ENCODE measurements at regions of chr3 and their contacts with region 1.

Region 1: DNA sequence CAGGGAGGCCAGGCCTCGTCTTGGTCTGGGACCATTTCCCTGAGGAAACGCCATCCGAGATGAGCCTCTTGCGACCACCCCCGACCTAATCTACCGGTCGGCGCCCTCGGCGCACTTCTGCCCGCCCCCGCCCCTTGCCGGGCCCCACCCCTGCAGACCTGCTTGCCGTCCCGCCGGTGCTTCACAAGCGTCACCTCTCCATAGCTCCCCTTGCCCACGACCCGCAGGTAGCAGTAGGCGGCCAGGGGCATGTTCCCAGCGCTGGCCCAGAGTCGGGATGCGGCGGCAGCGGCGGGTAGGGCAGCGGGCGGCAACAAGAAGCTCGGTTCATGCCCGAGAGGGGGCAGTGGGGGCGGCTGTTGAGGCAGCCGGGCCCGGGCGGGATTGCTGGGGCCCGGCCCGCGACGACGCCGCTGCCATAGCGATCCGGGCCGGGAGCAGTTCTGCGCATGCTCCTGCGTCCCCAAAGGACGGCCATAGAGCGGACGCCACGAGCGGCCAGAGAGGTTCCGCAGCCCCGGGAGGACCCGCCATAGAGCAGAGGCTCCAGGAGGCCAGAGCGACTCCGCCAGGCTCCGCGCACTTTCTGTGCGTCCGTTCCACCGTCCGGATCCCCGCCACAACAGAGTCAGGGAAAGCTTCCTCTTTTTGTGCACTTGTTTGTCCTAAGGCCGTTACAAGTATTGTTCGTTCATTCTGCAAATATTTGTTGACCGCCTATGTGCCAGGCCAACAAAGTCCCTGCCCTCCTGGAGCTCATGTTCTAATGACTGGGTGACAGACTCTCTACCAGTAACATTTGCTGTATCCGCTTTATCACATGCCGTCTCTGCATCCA is at the start of gene NEK4:
- DNase-seq: peak; percentile 84 to 90
- ATAC-seq: peak; percentile 96 to 97
- H3K4me3 ChIP-seq: peak within 1 kb of the TSS; percentile 83 to 97 (median 96)
- H3K27ac ChIP-seq: peak within 1 kb of the TSS; percentile 80 to 89 (median 84)
- H3K4me1 ChIP-seq: peaks cover 12 to 16% of the 10 kb centered on the region in 2 donors
- H3K27me3 ChIP-seq: no peaks in the 10 kb centered on the region
- CTCF ChIP-seq: no peak
- POLR2A ChIP-seq: peak; percentile 52 to 75
- total RNA-seq, gene NEK4: 16.4 to 25.6 (median 22.4) TPM

Region 2: DNA sequence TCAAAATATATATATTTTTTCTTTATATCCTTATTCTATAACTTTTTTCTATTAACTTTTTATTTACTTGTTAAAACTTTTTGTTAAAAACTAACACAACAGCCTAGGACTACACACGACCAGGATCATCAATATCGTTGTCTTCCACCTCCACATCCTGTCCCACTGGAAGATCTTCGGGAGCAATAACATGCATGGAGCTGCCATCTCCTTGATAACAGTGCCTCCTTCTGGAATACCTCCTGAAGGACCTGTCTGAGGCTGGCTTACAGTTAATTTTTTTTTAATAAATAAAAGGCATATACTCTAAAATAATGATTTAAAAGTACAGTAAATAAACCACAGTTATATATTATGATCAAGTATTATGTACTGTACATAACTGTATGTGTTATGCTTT is 216.2 kb after region 1 on chr3:
- in situ Hi-C with region 1: no loop called
- intact Hi-C with region 1: loop called (anchors 5 kb)
- DNase-seq: no peak
- ATAC-seq: peak; percentile 58 to 71
- H3K4me3 ChIP-seq: no peak overlapping the region
- H3K27ac ChIP-seq: no peak overlapping the region
- H3K4me1 ChIP-seq: peaks cover 6 to 26% of the 10 kb centered on the region in 2 donors
- H3K27me3 ChIP-seq: no peaks in the 10 kb centered on the region
- CTCF ChIP-seq: peak in 3 of 5 experiments; percentile 37 to 47 (median 38)
- POLR2A ChIP-seq: no peak